Dorsolateral prefrontal cortex (tissue), 120 donors: ENCODE measurements at regions of chr20 and their contacts with region 1.

Region 1: GRCh38 chr20:39081255-39081654 is 119.1 kb downstream of the DHX35 start:
- DNase-seq: peak; percentile 74 to 94 (median 82)
- H3K4me3 ChIP-seq: no peak overlapping the region
- H3K27ac ChIP-seq: no peak overlapping the region
- H3K27me3 ChIP-seq: peaks cover 0 to 11% (median 0%) of the 10 kb centered on the region in 45 donors
- CTCF ChIP-seq: peak; percentile 83 to 98 (median 94)

Region 2: GRCh38 chr20:39049684-39050554 is 31.3 kb before region 1 on chr20:
- intact Hi-C with region 1: loop called (anchors 1 to 2 kb)
- DNase-seq: peak; percentile 58 to 89 (median 72)
- H3K4me3 ChIP-seq: peak overlapping the region; percentile 39 to 91 (median 72)
- H3K27ac ChIP-seq: peak overlapping the region in 54 of 59 donors; percentile 6 to 91 (median 74)
- H3K27me3 ChIP-seq: no peaks in the 10 kb centered on the region
- CTCF ChIP-seq: peak; percentile 73 to 100 (median 98)

Region 3: DNA sequence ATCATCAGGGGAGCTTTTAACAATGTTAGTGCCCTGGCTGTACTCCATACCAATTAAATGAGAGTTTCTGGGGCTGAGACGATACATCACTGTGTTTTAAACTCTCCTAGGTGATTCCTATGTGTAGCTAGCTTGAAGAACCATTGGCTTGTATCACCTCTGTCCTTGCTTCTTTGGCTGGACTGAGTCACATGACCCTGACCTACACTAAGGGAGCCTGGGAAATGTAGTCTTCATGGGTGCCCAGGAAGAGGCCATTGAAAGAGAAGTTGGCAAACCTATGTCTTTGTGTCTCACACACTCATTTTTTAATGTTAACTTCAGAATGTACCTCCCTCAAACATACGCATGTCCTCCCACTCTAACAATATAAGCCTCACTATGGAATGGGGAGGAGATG is 387.4 kb after region 1 on chr20:
- intact Hi-C with region 1: no loop called
- DNase-seq: no peak
- H3K4me3 ChIP-seq: no peak overlapping the region
- H3K27ac ChIP-seq: no peak overlapping the region
- H3K27me3 ChIP-seq: peaks cover 0 to 4% (median 0%) of the 10 kb centered on the region in 45 donors
- CTCF ChIP-seq: no peak